ENCODE measurements at regions of chr11 and their contacts with region 1.

Region 1: GRCh38 chr11:17384002-17384511 is 4.4 kb downstream of the KCNJ11 start:
- DNase-seq: peak; percentile 86
- H3K4me3 ChIP-seq: no peak overlapping the region
- H3K27ac ChIP-seq: no peak overlapping the region
- H3K4me1 ChIP-seq: no peaks in the 10 kb centered on the region
- H3K27me3 ChIP-seq: no peaks in the 10 kb centered on the region
- CTCF ChIP-seq: peak; percentile 82

Region 2: DNA sequence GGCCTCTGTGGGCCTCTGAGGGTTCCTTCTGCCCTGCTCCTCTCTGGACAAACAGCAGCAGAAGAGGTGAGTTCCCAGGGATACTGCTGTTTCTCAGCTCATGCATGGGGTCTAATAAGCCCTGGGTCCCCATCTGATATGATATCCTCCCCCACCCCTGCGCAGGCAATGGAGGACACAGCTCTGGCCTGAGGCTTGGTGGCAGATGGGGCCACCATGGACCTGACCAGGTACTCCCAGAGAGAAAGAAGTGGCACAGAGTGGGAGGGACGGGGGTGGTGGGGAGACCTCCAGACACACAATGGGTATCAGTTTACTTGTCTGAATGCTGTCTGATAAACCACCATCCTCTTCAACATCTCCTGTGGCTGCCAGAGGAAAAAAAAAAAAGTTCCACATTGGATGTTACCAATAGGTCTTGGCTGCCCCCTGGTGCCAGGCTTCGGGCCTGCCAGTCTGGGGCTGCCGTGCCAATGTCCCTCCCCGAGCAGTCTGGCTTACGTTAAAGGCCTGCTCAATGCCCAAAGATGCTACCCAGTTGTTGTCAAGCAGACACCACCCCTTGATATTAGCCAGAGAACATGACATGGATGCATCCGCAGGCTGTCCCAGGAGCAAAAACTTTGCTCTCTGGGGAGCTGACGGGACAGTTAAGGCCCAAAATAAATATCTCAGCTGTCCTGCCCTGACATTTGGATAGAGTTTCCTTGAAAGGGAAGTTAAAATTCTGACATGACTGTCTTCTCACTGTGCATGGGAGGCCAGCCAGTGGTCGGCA is 120.5 kb after region 1 on chr11:
- CTCF ChIA-PET with region 1: interaction called, 5 read pairs
- POLR2A ChIA-PET with region 1: no interaction called
- intact Hi-C with region 1: loop called (anchors 1 kb)
- DNase-seq: peak; percentile 68
- H3K4me3 ChIP-seq: no peak overlapping the region
- H3K27ac ChIP-seq: no peak overlapping the region
- H3K4me1 ChIP-seq: no peaks in the 10 kb centered on the region
- H3K27me3 ChIP-seq: no peaks in the 10 kb centered on the region
- CTCF ChIP-seq: peak; percentile 81

Region 3: GRCh38 chr11:17528181-17528691 is 144.2 kb after region 1 on chr11:
- CTCF ChIA-PET with region 1: interaction called, 18 read pairs
- POLR2A ChIA-PET with region 1: no interaction called
- intact Hi-C with region 1: loop called (anchors 1 kb)
- DNase-seq: peak; percentile 60
- H3K4me3 ChIP-seq: no peak overlapping the region
- H3K27ac ChIP-seq: no peak overlapping the region
- H3K4me1 ChIP-seq: no peaks in the 10 kb centered on the region
- H3K27me3 ChIP-seq: no peaks in the 10 kb centered on the region
- CTCF ChIP-seq: peak; percentile 73

Region 4: DNA sequence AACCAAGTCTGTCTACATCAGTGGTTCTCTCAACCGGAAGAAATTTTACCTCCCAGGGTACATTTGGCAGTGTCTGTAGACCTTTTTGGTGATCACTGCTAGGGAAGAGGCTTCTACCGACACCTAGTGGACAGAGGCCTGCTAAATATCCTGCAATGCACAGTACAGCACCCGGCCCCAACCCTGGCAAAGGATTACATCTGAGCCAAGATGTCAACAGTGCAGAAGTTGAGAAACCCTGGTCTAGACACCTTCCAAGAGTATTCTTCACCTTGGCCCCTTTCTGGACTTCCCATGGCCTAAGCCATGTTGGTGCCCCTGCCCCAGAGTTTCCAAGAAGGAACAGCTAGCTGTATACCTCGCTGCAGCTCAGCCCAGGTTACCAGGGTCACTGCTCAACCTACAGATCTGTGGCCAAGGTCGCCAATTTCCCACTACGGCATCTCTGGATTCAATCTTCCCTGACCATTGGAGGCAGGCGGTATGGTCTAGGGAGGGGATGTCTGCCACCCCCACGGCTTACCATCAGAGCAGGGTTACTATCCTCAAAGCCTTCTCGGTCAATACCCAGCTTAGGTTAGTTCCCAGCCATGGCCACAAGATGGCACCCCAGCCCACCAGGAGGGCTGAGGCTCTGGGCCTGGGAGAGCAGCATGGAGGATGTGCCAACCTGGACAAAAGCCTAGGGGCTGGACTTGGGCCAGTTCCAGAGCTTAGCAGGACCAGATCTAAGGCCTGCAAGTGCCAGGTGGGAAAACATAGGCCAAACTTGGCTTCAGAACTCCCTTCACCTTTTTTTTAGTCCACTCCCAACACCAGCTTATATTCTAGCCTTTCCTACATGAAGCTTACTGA is 346.8 kb after region 1 on chr11:
- CTCF ChIA-PET with region 1: no interaction called
- POLR2A ChIA-PET with region 1: no interaction called
- intact Hi-C with region 1: loop called (anchors 10 kb)
- DNase-seq: peak; percentile 84
- H3K4me3 ChIP-seq: no peak overlapping the region
- H3K27ac ChIP-seq: no peak overlapping the region
- H3K4me1 ChIP-seq: no peaks in the 10 kb centered on the region
- H3K27me3 ChIP-seq: peaks cover 24% of the 10 kb centered on the region
- CTCF ChIP-seq: peak; percentile 68